PC-3 (cell line): ENCODE measurements at regions of chr11 and their contacts with region 1.

Region 1: DNA sequence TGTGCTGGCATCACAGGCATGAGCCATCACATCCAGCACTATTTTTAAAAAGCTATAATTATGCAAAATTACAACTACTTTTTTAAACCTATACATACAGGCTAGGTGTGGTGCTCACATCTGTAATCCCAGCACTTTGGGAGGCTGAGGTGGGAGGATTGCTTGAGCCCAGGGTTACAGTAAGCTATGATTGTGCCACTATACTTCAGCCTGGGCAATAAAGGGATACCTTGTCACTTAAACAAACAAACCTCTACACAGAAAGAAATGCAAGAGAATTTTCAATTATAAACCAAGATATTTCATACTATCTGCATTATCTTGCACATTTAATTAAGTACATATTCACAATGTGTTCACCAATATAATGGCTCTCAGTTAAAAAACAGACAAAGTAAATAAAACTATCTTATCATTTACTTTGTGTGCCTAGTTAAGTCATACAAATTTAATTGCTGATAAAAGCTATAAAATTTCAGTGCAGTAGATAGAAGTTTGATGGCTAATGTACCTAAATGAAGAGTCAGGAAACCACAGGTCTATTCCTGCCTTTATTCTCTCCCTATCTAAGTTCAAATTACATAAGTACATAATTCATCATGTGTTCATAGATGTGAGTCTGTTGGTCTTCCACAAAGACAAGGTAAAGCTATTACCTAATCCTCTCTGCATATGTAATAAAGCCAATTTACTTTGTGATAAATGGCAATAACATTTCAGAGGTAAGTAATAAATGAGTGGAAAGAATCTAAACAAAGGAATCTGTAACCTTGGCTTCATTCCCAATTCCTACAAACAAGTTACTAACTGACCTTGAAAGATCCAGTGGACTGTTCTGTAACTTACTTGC is 9.0 kb upstream of the RDX start:
- DNase-seq: peak; percentile 98
- ATAC-seq: peak; percentile 89
- H3K4me3 ChIP-seq: no peak overlapping the region
- H3K27ac ChIP-seq: peak overlapping the region; percentile 93
- H3K4me1 ChIP-seq: peaks cover 39% of the 10 kb centered on the region
- H3K27me3 ChIP-seq: no peaks in the 10 kb centered on the region
- CTCF ChIP-seq: no peak

Region 2: GRCh38 chr11:110356756-110357671 is 51.6 kb after region 1 on chr11:
- CTCF ChIA-PET with region 1: no interaction called
- POLR2A ChIA-PET with region 1: interaction called, 3 read pairs
- intact Hi-C with region 1: loop called (anchors 2 kb)
- DNase-seq: peak; percentile 97
- ATAC-seq: peak; percentile 97
- H3K4me3 ChIP-seq: peak overlapping the region; percentile 16; the same call in 1 of the 2 replicates
- H3K27ac ChIP-seq: peak overlapping the region; percentile 94
- H3K4me1 ChIP-seq: peaks cover 23% of the 10 kb centered on the region
- H3K27me3 ChIP-seq: no peaks in the 10 kb centered on the region
- CTCF ChIP-seq: no peak